ENCODE measurements at regions of chr5 and their contacts with region 1.

Region 1: GRCh38 chr5:37174928-37175327 is 74.2 kb downstream of the CPLANE1 start:
- DNase-seq: no peak
- ATAC-seq: no peak
- H3K4me3 ChIP-seq: no peak overlapping the region
- H3K27ac ChIP-seq: no peak overlapping the region
- H3K4me1 ChIP-seq: no peaks in the 10 kb centered on the region
- H3K27me3 ChIP-seq: no peaks in the 10 kb centered on the region
- CTCF ChIP-seq: no peak

Region 2: GRCh38 chr5:37054391-37054790 is 120.5 kb before region 1 on chr5:
- intact Hi-C with region 1: loop called in 1 of 10 experiments (anchors 10 kb)
- DNase-seq: no peak
- ATAC-seq: no peak
- H3K4me3 ChIP-seq: no peak overlapping the region
- H3K27ac ChIP-seq: no peak overlapping the region
- H3K4me1 ChIP-seq: no peaks in the 10 kb centered on the region
- H3K27me3 ChIP-seq: no peaks in the 10 kb centered on the region
- CTCF ChIP-seq: no peak

Region 3: GRCh38 chr5:37319037-37319782 is 144.3 kb after region 1 on chr5:
- intact Hi-C with region 1: loop called in 1 of 10 experiments (anchors 10 kb)
- DNase-seq: no peak
- ATAC-seq: no peak
- H3K4me3 ChIP-seq: no peak overlapping the region
- H3K27ac ChIP-seq: no peak overlapping the region
- H3K4me1 ChIP-seq: peaks cover 0 to 9% (median 0%) of the 10 kb centered on the region in 9 donors
- H3K27me3 ChIP-seq: no peaks in the 10 kb centered on the region
- CTCF ChIP-seq: no peak

Region 4: GRCh38 chr5:37520811-37521210 is 345.9 kb after region 1 on chr5:
- intact Hi-C with region 1: no loop called
- DNase-seq: no peak
- ATAC-seq: no peak
- H3K4me3 ChIP-seq: no peak overlapping the region
- H3K27ac ChIP-seq: no peak overlapping the region
- H3K4me1 ChIP-seq: no peaks in the 10 kb centered on the region
- H3K27me3 ChIP-seq: no peaks in the 10 kb centered on the region
- CTCF ChIP-seq: no peak

Measured in heart right ventricle (tissue), 16 donors.